WTC11 (cell line): ENCODE measurements at regions of chr1 and their contacts with region 1.

Region 1: DNA sequence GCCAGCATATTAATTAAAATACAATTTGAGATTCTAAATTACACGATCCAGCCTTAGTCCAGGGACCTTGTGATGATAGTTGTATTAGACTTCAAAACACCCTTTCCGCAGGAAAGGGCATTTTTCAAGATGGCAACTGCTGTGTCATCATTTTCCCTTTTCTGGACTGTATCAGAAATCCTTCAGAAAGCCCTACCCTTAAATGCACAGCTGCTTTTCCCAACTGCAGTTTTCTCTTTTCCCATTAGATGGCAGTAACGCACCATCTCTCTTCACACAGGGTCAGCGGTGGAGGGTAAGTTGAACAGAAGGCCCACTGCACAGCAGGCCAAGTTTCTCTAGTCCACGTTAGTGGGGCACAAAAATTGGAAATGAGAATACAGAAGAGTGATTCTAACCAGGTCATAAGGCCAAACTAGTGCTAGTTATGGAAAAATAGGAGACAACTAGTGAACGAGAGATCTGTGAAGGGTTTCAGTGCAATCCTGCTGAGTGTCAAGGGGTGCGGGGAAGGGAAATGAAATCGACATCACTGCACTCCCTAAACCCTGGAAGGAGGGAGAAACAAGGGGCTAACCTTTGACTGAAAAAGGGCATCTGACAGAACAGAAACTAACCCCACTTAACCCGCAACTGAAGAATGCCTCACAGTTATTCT is 22.1 kb upstream of the TDRD10 start:
- DNase-seq: peak; percentile 54
- ATAC-seq: peak; percentile 84
- H3K4me3 Mint-ChIP-seq: no peak overlapping the region
- H3K27ac Mint-ChIP-seq: no peak overlapping the region
- H3K4me1 Mint-ChIP-seq: peaks cover 21% of the 10 kb centered on the region
- H3K27me3 Mint-ChIP-seq: no peaks in the 10 kb centered on the region
- CTCF ChIP-seq: peak; percentile 78

Region 2: GRCh38 chr1:154352581-154353459 is 127.1 kb before region 1 on chr1:
- CTCF ChIA-PET with region 1: interaction called, 10 read pairs
- POLR2A ChIA-PET with region 1: no interaction called
- DNase-seq: peak; percentile 73
- ATAC-seq: peak; percentile 69
- H3K4me3 Mint-ChIP-seq: peak overlapping the region; percentile 87
- H3K27ac Mint-ChIP-seq: no peak overlapping the region; the same call in none of the 2 replicates
- H3K4me1 Mint-ChIP-seq: peaks cover 13% of the 10 kb centered on the region
- H3K27me3 Mint-ChIP-seq: peaks cover 22% of the 10 kb centered on the region
- CTCF ChIP-seq: no peak

Region 3: GRCh38 chr1:154466921-154467417 is 12.9 kb before region 1 on chr1:
- CTCF ChIA-PET with region 1: interaction called, 27 read pairs
- POLR2A ChIA-PET with region 1: no interaction called
- DNase-seq: no peak
- ATAC-seq: peak; percentile 59
- H3K4me3 Mint-ChIP-seq: no peak overlapping the region
- H3K27ac Mint-ChIP-seq: no peak overlapping the region
- H3K4me1 Mint-ChIP-seq: peaks cover 16% of the 10 kb centered on the region
- H3K27me3 Mint-ChIP-seq: no peaks in the 10 kb centered on the region
- CTCF ChIP-seq: no peak

Region 4: GRCh38 chr1:154493276-154493675 is 13.4 kb after region 1 on chr1:
- CTCF ChIA-PET with region 1: interaction called, 23 read pairs
- POLR2A ChIA-PET with region 1: no interaction called
- DNase-seq: peak; percentile 26
- ATAC-seq: peak; percentile 88
- H3K4me3 Mint-ChIP-seq: no peak overlapping the region
- H3K27ac Mint-ChIP-seq: peak overlapping the region; percentile 74; the same call in 1 of the 2 replicates
- H3K4me1 Mint-ChIP-seq: peaks cover 26% of the 10 kb centered on the region
- H3K27me3 Mint-ChIP-seq: peaks cover 4% of the 10 kb centered on the region
- CTCF ChIP-seq: no peak

Region 5: GRCh38 chr1:154501423-154502065 is 21.7 kb after region 1 on chr1:
- CTCF ChIA-PET with region 1: interaction called, 10 read pairs
- POLR2A ChIA-PET with region 1: no interaction called
- DNase-seq: peak; percentile 59
- ATAC-seq: peak; percentile 54
- H3K4me3 Mint-ChIP-seq: peak overlapping the region; percentile 70
- H3K27ac Mint-ChIP-seq: no peak overlapping the region
- H3K4me1 Mint-ChIP-seq: peaks cover 11% of the 10 kb centered on the region
- H3K27me3 Mint-ChIP-seq: peaks cover 77% of the 10 kb centered on the region
- CTCF ChIP-seq: no peak

Region 6: DNA sequence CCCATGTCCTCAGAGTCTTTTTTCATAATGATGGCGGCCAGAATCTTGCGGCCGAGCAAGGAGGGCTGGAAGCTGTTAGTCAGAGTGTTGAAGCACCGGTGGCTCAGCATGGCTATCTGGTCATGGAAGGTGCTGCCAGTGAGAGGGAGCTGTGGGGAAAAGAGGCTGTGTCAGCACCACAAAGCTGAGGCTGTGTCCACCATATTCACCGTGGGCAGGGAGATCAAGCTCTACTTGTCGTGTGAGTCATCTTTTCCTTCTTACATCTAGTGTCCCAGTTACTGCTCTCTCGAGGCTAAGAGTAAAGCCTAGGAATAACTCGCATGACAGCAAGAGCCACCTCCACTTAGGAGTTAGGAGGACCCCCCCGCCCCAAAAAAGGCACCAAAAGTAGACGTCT is 109.9 kb after region 1 on chr1:
- CTCF ChIA-PET with region 1: no interaction called
- POLR2A ChIA-PET with region 1: no interaction called
- DNase-seq: no peak
- ATAC-seq: no peak
- H3K4me3 Mint-ChIP-seq: no peak overlapping the region
- H3K27ac Mint-ChIP-seq: no peak overlapping the region
- H3K4me1 Mint-ChIP-seq: no peaks in the 10 kb centered on the region
- H3K27me3 Mint-ChIP-seq: no peaks in the 10 kb centered on the region
- CTCF ChIP-seq: no peak